Panc1 (cell line): ENCODE measurements at regions of chr6 and their contacts with region 1.

Region 1: DNA sequence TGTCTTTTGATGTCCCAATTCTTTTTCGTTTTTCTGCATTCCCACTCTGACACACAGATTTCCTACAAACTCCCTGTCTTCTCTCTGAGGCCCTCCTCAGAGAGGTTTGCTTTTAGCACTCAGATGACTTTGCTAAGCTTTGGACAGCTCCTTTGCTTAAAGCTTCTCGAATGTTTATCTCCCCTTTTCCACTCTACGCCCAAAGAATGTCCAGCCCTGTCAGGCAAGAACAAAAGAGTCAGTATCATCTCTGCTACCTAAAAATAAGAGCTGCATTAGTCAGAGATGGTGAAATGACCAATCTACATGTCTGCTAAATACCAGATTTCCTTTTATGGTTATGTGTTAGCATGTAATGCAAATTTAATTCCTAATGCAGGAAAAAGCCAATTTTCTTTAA is 56.8 kb downstream of the PREP start:
- DNase-seq: no peak
- ATAC-seq: no peak
- H3K4me3 ChIP-seq: no peak overlapping the region
- H3K27ac ChIP-seq: no peak overlapping the region
- H3K4me1 ChIP-seq: no peaks in the 10 kb centered on the region
- H3K27me3 ChIP-seq: no peaks in the 10 kb centered on the region
- CTCF ChIP-seq: no peak

Region 2: GRCh38 chr6:104736545-104736944 is 609.5 kb before region 1 on chr6:
- CTCF ChIA-PET with region 1: no interaction called
- POLR2A ChIA-PET with region 1: no interaction called
- in situ Hi-C with region 1: no loop called
- intact Hi-C with region 1: no loop called
- DNase-seq: no peak
- ATAC-seq: no peak
- H3K4me3 ChIP-seq: no peak overlapping the region
- H3K27ac ChIP-seq: no peak overlapping the region
- H3K4me1 ChIP-seq: no peaks in the 10 kb centered on the region
- H3K27me3 ChIP-seq: no peaks in the 10 kb centered on the region
- CTCF ChIP-seq: no peak

Region 3: DNA sequence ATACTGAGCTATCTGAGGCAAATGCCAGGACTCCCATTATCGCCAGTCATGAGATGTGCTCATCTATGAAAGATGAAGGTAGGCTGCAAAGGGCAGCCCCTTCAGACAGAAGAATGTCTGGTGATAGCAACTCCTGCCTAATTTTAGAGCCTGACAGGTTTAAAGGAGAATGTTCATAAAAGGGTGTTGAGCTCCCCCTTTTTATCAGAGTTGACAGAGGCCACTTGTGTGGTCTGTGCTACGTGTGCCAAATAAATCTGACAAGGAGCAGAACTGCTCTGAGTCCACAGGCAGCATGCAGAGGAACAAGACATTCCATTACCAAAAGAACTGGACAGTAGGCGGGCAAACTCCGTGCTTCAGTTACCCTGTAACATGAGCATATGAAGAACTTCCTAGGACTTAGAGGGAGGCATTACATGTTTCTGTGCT is 45.0 kb before region 1 on chr6:
- CTCF ChIA-PET with region 1: no interaction called
- POLR2A ChIA-PET with region 1: no interaction called
- in situ Hi-C with region 1: no loop called
- intact Hi-C with region 1: no loop called
- DNase-seq: no peak
- ATAC-seq: no peak
- H3K4me3 ChIP-seq: no peak overlapping the region
- H3K27ac ChIP-seq: no peak overlapping the region
- H3K4me1 ChIP-seq: no peaks in the 10 kb centered on the region
- H3K27me3 ChIP-seq: no peaks in the 10 kb centered on the region
- CTCF ChIP-seq: no peak

Region 4: GRCh38 chr6:105389543-105389942 is 43.5 kb after region 1 on chr6:
- CTCF ChIA-PET with region 1: no interaction called
- POLR2A ChIA-PET with region 1: no interaction called
- in situ Hi-C with region 1: loop called (anchors 5 kb)
- intact Hi-C with region 1: no loop called
- DNase-seq: no peak
- ATAC-seq: no peak
- H3K4me3 ChIP-seq: no peak overlapping the region
- H3K27ac ChIP-seq: no peak overlapping the region
- H3K4me1 ChIP-seq: no peaks in the 10 kb centered on the region
- H3K27me3 ChIP-seq: no peaks in the 10 kb centered on the region
- CTCF ChIP-seq: no peak